Sigmoid colon (tissue), 7 donors: ENCODE measurements at regions of chr4 and their contacts with region 1.

Region 1: DNA sequence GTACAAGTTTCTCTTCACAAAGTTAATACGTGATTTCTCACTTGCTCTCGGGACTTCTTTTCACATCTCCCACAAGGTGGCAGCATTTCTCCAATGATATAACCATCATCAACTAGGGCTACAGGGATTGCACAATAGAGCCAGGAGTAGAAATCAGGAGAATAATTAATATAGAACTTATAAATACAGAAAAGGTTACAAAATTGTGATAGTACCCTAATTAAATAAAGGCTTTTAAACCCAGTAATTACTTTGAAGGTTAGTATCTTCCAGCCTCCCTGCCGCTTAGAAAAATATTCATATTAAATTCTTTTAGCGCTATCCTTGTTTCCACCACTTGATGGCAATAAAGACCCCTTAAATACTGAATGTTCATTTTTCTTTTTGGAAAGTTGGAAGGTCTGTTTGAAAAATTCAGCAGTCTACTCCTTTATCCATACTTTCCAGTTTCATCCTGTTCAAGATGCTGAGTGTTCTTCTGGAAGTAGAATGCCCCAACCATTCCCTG is 65.8 kb downstream of the RASGEF1B start:
- DNase-seq: no peak
- H3K4me3 ChIP-seq: peak overlapping the region in 2 of 4 donors; percentile 3 to 6
- H3K27ac ChIP-seq: no peak overlapping the region
- H3K4me1 ChIP-seq: peaks cover 0 to 3% (median 1%) of the 10 kb centered on the region in 4 donors
- H3K27me3 ChIP-seq: no peaks in the 10 kb centered on the region
- CTCF ChIP-seq: peak; percentile 67 to 84 (median 69)
- EP300 ChIP-seq: no peak
- POLR2A ChIP-seq: no peak

Region 2: DNA sequence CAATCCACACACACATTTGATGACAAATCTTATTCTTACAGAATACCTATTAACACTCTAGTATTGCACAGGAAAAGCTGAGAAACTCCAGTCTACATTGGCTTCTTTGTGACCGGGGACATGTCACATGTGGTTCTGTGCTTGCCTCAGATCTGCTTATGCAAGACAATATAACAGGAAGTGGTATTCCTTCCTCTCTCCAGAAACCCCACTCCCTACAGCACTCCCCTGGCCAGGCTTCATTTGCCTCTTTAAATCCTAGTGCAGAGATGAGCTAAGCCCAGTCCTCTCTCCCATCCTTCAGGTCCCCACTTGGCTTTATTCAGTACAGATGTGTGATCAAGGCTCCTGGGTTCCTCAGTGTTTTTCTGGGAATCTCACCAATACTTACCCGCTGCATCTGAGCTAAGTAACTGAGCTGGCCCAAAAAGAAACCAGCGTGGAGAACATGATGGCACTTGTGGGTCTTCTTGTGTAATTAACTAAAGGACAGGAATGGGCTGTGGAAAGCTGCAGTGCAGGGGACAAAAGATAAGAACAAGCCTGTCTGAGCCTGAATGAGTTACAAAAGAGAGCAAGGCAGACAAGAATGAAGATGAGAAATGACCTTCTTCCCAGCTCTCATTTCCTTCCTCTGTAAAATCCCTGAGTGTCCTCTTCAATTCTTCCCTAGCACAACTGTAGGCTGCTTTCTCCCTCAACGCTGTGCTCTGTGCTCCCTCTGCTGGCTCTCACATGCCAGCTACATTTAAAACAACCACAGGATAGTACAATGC is 862.3 kb after region 1 on chr4:
- intact Hi-C with region 1: loop called (anchors 5 kb)
- DNase-seq: peak; percentile 74
- H3K4me3 ChIP-seq: no peak overlapping the region
- H3K27ac ChIP-seq: no peak overlapping the region
- H3K4me1 ChIP-seq: no peaks in the 10 kb centered on the region
- H3K27me3 ChIP-seq: no peaks in the 10 kb centered on the region
- CTCF ChIP-seq: peak; percentile 29 to 69 (median 50)
- EP300 ChIP-seq: no peak
- POLR2A ChIP-seq: no peak